ENCODE measurements at regions of chr12 and their contacts with region 1.

Region 1: DNA sequence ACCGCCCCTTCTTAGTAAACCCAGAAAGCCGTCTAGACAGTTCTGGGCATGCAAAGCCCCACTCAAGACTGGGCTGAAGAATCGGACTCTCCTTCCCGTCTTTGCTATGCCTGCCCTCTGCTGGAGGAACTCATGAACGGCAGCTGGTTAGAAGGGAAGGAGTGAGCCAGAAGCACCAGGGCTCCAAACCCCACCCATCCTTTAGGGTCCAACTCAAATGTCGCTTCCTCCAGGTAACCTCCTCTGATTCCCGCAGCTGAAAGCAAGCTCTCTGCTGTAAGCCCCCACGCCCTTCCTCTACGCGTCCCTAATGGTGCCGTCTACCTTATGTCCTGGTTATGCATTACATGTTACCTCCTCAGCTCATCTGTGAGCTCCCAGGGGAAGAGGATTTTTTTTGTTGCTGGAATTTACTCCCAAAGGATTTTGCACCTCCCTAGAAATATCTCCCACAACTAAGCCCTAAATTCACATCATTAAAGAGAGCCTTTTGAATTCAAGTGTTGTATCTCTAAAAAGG is 59.0 kb upstream of the SCN8A start:
- DNase-seq: peak in 1 of 2 donors; percentile 77
- ATAC-seq: peak; percentile 84
- H3K4me3 ChIP-seq: no peak overlapping the region
- H3K27ac ChIP-seq: no peak overlapping the region
- H3K4me1 ChIP-seq: no peaks in the 10 kb centered on the region
- H3K27me3 ChIP-seq: peaks cover 0 to 2% of the 10 kb centered on the region in 2 donors

Region 2: GRCh38 chr12:51424662-51425438 is 107.2 kb before region 1 on chr12 and contains the start of gene SLC4A8:
- intact Hi-C with region 1: loop called in 1 of 2 experiments (anchors 5 kb)
- DNase-seq: peak; percentile 90 to 94
- ATAC-seq: peak; percentile 93
- H3K4me3 ChIP-seq: peak within 1 kb of the TSS in 1 of 2 donors; percentile 0
- H3K27ac ChIP-seq: no peak within 1 kb of the TSS
- H3K4me1 ChIP-seq: no peaks in the 10 kb centered on the region
- H3K27me3 ChIP-seq: no peaks in the 10 kb centered on the region
- total RNA-seq, gene SLC4A8: 1.4 to 3.2 TPM

Region 3: DNA sequence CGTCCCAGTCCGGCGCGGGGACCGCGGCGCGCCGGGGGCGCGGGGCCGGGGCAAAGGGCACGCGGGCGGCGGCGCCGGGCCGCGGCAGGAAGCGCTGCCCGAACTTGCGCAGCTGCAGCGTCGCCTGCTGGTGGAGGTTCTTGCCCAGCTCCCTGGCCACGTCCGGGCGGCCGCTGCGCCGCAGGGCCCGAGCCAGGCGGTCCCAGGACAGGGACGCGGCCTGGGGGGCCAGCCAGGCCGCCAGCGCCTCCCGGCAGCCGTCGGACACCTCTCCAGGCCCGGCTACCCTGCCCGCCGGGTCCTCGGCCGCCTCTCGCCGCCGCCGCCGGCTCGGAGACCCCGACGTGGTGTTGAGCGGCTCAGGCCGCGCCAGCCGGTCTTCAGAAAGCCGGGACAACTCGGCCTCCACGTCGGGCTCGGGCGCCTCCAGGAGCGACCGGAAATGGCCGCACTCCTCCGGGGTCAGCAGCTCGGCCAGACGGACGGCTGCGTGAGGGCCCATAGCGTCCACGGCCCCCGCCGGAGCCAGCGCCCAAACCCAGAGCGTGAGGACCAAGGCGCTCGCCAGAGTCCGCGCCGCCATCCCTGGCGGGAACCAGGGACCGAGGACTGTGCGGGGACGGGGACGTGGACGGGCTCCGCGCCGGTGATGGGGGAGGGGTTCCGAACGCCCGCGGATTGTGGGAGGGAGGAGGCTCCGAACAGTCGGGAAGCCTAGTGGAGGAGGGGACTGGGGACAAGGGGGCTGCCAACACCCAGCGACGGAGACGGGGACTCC is 282.5 kb after region 1 on chr12:
- intact Hi-C with region 1: loop called in 1 of 2 experiments (anchors 10 kb)
- DNase-seq: peak; percentile 87 to 92
- ATAC-seq: peak; percentile 87
- H3K4me3 ChIP-seq: peak overlapping the region; percentile 9 to 36
- H3K27ac ChIP-seq: no peak overlapping the region
- H3K4me1 ChIP-seq: no peaks in the 10 kb centered on the region
- H3K27me3 ChIP-seq: no peaks in the 10 kb centered on the region

Measured in aorta (tissue), 5 donors.